Endothelial cell of umbilical vein (primary cell): ENCODE measurements at regions of chrX and their contacts with region 1.

Region 1: DNA sequence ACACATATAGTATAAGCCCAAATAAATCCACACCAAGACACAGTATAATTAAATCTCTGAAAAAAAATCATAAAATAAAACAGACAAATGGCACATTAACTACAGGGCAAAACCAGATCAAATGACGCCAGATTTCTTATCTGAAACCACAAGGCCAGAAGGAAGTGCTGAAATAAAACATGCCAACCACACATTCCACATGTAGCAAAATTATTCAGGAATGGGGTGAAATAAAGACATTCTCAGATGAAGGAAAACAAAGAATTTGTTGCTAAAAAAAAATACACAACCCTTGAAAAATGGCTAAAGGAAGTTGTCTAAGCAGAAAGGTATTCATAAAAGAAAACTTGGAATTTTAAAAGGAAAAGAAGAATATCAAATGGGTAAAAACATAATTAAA is 4.5 kb upstream of the DCAF12L1 start:
- DNase-seq: peak; percentile 69
- H3K4me3 ChIP-seq: no peak overlapping the region
- H3K27ac ChIP-seq: peak overlapping the region; percentile 86
- H3K4me1 ChIP-seq: peaks cover 26% of the 10 kb centered on the region
- H3K27me3 ChIP-seq: no peaks in the 10 kb centered on the region
- CTCF ChIP-seq: no peak
- POLR2A ChIP-seq: no peak

Region 2: GRCh38 chrX:126785539-126785938 is 228.4 kb after region 1 on chrX:
- CTCF ChIA-PET with region 1: no interaction called
- POLR2A ChIA-PET with region 1: no interaction called
- dilution Hi-C with region 1: no loop called
- intact Hi-C with region 1: no loop called
- DNase-seq: no peak
- H3K4me3 ChIP-seq: no peak overlapping the region
- H3K27ac ChIP-seq: no peak overlapping the region
- H3K4me1 ChIP-seq: no peaks in the 10 kb centered on the region
- H3K27me3 ChIP-seq: no peaks in the 10 kb centered on the region
- CTCF ChIP-seq: no peak
- POLR2A ChIP-seq: no peak

Region 3: DNA sequence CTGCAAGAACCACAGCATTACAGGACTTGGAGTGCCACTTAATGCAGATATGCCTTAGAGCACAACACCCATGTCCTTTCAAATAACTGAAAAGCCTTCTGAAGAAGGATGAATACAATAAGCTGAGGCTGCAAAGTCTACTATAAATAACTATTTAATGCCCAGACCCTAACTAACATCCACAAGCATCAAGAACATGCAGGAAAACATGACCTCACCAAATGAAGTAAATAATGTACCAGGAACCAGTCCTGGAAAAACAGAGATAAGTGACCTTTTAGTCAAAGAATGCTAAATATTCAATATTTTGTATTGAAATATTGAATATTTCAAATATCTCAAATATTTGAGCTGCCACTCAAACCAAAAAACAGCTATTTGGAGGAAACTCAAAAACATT is 1478.2 kb after region 1 on chrX:
- CTCF ChIA-PET with region 1: no interaction called
- POLR2A ChIA-PET with region 1: no interaction called
- dilution Hi-C with region 1: no loop called
- intact Hi-C with region 1: loop called (anchors 5 kb)
- DNase-seq: peak; percentile 76
- H3K4me3 ChIP-seq: no peak overlapping the region
- H3K27ac ChIP-seq: peak overlapping the region; percentile 99
- H3K4me1 ChIP-seq: peaks cover 20% of the 10 kb centered on the region
- H3K27me3 ChIP-seq: no peaks in the 10 kb centered on the region
- CTCF ChIP-seq: no peak
- POLR2A ChIP-seq: no peak